Breast epithelium (tissue), 4 donors: ENCODE measurements at regions of chr22 and their contacts with region 1.

Region 1: DNA sequence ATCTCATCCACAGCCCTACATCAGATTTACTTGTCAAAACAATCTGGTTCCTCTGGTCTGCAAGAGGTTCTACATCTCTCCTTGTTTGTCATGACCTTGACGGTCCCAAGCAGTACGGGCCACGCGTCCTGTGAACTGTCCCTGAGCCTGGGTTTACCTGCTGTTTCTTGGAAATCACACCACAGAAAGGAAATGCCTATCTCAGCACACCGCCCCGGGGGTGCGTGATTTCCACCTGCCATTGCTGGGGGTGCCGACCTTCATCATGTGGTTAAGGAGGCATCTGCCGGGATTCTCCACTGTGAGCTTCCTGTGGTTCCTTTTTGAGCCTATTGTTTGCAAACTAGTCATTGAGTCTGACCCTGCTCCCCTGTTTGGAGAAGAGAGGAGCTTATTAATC is 1363.4 kb downstream of the BRD1 start:
- DNase-seq: no peak
- H3K4me3 ChIP-seq: no peak overlapping the region
- H3K27ac ChIP-seq: no peak overlapping the region
- H3K4me1 ChIP-seq: no peaks in the 10 kb centered on the region
- H3K27me3 ChIP-seq: peaks cover 0 to 43% of the 10 kb centered on the region in 2 donors
- CTCF ChIP-seq: no peak
- POLR2A ChIP-seq: no peak

Region 2: DNA sequence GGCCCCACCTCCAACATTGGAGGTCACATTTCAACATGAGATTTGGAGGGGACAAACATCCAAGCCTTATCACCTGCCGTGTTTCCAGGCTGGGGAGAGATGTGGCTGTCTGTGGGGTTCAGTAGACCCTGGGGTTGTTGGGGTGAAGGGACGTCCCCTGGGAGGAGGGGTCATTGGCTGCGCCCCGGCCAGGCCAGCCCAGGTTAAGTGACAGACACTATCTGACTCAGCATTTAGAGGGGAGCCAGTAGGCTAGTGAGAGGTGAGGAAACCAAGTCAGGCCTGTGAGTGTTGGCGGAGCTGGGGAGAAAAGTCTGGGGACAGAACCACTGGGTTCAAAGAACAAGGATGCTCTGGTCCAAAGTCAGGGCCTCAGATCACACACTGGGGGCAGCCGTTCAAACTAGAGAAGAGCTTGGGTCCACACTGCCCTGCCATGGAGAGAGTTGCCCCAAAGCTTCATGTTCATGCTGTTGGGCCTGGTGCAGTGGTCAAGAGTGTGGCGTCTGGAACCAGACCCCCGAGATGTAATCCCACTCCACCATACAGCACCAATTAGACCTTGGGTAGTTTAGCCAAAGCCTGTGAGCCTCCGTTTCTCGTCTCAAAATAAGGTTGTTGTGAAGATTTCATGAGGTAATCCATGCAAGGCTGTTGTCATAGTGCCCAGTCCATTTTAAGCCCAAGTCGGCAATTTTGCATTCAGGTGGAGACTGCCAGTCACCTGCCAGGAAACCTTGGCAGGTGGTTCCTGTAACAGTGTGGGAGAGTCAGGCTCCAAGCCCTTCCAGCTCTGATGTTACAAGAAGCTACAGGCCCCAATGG is 412.2 kb before region 1 on chr22:
- intact Hi-C with region 1: loop called (anchors 5 kb)
- DNase-seq: no peak
- H3K4me3 ChIP-seq: no peak overlapping the region
- H3K27ac ChIP-seq: no peak overlapping the region
- H3K4me1 ChIP-seq: no peaks in the 10 kb centered on the region
- H3K27me3 ChIP-seq: peaks cover 0 to 21% of the 10 kb centered on the region in 2 donors
- CTCF ChIP-seq: no peak
- POLR2A ChIP-seq: no peak

Region 3: DNA sequence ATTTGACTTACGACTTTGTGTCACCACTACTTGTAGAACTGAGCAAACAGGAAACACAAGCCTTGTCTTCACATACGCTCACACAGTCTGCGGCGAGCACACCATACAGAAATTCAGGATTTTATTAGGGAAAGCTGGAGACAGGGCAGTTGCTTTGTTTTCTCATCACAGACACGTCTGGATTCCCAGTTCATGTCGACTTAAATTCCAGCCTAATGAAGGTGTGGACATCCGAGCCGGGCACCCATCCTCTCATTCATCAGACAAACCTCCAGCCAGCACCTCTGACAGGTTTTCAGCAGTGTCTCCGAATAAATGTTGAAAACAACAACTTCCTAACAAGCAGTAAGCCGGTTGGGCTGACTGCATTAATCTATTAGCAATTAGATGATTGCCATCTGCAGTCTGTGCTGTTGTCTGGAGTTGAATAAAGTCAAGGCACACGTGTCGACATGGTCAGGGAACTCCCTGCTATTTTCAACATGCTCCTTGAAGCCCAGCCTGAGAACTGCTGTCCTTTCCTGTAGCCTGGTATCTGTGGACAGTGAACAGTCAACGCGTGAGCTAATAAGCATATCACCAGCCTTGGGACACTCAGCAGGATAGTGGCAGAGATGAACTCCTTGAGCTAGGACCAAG is 47.5 kb before region 1 on chr22:
- intact Hi-C with region 1: no loop called
- DNase-seq: no peak
- H3K4me3 ChIP-seq: no peak overlapping the region
- H3K27ac ChIP-seq: no peak overlapping the region
- H3K4me1 ChIP-seq: no peaks in the 10 kb centered on the region
- H3K27me3 ChIP-seq: peaks cover 0 to 7% of the 10 kb centered on the region in 2 donors
- CTCF ChIP-seq: no peak
- POLR2A ChIP-seq: no peak

Region 4: DNA sequence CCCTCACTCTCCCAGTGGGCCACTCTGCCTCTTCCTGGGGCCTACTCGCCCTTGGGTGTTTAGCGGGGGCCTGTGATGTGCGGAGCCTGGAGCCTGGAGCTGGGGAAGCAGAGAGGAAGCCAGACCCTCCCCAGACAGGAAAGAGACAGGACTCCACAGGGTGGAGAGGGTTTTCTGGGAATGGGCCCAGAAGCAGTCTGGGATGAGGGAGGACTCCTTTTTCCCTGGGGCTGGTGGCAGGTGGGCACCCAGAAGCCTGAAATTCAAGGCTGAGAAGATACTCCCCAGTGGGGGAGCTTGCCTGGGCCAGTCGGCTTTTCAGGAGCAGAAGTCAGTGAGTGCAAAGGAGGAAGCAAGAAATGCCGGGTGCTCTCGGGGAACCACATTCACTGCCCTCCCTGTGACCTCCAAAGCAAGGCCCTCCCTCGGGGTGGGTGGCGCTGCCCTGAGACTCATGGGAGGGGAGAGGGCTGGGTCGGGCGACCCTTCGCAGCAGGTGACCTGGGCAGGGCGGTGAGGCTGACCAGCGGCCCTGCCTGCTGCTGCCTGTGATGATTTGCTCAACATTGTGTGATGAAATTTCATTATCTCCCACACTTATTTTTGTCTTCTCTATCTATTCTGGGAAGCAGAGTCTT is 13.9 kb before region 1 on chr22:
- intact Hi-C with region 1: no loop called
- DNase-seq: no peak
- H3K4me3 ChIP-seq: no peak overlapping the region
- H3K27ac ChIP-seq: no peak overlapping the region
- H3K4me1 ChIP-seq: no peaks in the 10 kb centered on the region
- H3K27me3 ChIP-seq: peaks cover 0 to 43% of the 10 kb centered on the region in 2 donors
- CTCF ChIP-seq: no peak
- POLR2A ChIP-seq: no peak

Region 5: GRCh38 chr22:48492366-48493320 is 28.4 kb after region 1 on chr22:
- intact Hi-C with region 1: no loop called
- DNase-seq: peak; percentile 48 to 56
- H3K4me3 ChIP-seq: no peak overlapping the region
- H3K27ac ChIP-seq: no peak overlapping the region
- H3K4me1 ChIP-seq: no peaks in the 10 kb centered on the region
- H3K27me3 ChIP-seq: peaks cover 4 to 62% of the 10 kb centered on the region in 2 donors
- CTCF ChIP-seq: peak in 2 of 3 donors; percentile 65 to 72
- POLR2A ChIP-seq: no peak

Region 6: GRCh38 chr22:48886604-48887393 is 422.6 kb after region 1 on chr22:
- intact Hi-C with region 1: no loop called
- DNase-seq: no peak
- H3K4me3 ChIP-seq: no peak overlapping the region
- H3K27ac ChIP-seq: no peak overlapping the region
- H3K4me1 ChIP-seq: no peaks in the 10 kb centered on the region
- H3K27me3 ChIP-seq: peaks cover 0 to 40% of the 10 kb centered on the region in 2 donors
- CTCF ChIP-seq: no peak
- POLR2A ChIP-seq: no peak